Endothelial cell of umbilical vein (primary cell): ENCODE measurements at regions of chr2 and their contacts with region 1.

Region 1: DNA sequence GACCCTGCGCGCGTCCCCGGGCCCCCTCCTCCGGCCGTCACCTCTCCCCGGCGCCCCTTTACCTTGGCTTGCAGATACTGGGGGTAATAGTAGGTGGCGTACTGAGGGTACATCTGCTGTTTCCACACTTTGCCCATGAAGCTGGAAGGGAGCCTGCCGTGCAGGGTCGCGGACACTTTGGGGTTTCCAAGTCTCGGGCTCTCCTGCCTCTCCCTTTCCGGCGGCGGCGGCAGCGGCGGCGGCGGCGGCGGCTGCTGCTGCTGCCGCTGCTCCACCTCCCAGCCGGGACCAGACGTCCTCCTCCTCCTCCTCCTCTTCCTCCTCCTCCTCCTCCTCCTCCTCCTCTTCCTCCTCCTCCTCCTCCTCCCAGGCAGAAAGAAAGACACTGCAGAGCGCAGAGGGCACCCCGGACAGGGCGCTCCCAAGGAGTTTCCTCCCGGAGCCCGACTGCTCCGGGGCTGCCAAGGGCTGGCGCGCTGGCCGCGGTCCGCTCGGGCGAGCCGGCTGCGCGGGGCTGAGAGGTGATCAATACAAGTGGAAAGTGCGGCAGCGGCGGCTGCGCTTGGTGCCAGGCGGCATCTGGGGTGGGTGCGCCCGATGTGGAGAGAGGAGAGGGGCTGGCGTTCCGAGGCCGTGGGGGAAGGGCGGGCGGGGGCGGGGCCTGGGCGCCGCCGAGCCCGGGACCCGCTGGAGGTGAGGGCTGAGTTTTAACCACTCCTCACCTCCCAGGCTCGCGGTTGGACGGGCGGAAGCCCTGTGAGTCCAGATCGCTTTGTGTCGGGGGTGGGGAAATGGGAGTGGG is at the start of gene RBMS1:
- DNase-seq: no peak
- H3K4me3 ChIP-seq: peak within 1 kb of the TSS; percentile 98 to 100 (median 99)
- H3K27ac ChIP-seq: peak within 1 kb of the TSS; percentile 89
- H3K4me1 ChIP-seq: peaks cover 25% of the 10 kb centered on the region
- H3K27me3 ChIP-seq: no peaks in the 10 kb centered on the region
- CTCF ChIP-seq: no peak
- POLR2A ChIP-seq: no peak
- total RNA-seq, gene RBMS1: 93.3 and 94.8 TPM in 2 replicates

Region 2: GRCh38 chr2:160278879-160279177 is 214.6 kb before region 1 on chr2:
- CTCF ChIA-PET with region 1: no interaction called
- POLR2A ChIA-PET with region 1: no interaction called
- dilution Hi-C with region 1: no loop called
- intact Hi-C with region 1: loop called (anchors 5 kb)
- DNase-seq: peak; percentile 58
- H3K4me3 ChIP-seq: no peak overlapping the region
- H3K27ac ChIP-seq: peak overlapping the region; percentile 80
- H3K4me1 ChIP-seq: peaks cover 44% of the 10 kb centered on the region
- H3K27me3 ChIP-seq: no peaks in the 10 kb centered on the region
- CTCF ChIP-seq: peak; percentile 29 to 50
- POLR2A ChIP-seq: peak; percentile 0

Region 3: DNA sequence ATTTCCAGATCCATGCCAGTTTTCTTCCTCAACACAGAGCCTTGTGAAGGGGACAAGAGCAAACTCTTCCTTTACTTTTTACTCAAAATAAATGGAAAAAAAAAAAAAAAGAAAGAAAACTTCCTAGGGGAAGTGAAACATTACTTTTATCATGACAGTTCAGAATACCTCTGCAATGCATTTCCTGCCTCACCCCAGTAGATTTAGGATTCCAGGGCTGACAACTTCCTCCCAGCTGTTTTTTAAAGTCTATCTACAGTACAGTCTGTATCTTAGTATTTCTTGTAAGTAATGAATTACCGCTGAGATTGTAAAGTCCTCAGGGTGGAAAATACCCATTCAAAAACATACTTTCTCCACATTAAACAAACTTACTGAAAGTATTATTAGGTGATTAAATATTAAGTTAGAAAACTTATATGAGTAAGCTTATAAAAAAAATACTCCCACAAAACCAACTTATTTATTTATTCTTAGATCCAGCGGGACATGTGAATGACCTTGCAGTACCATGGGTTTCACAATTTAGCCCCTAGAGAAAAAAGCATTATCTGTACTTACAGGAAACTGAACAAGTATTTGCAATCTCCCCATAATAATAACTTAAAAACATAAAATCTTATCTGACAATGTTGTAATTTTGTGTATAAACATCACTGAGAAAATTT is 117.5 kb before region 1 on chr2:
- CTCF ChIA-PET with region 1: no interaction called
- POLR2A ChIA-PET with region 1: no interaction called
- dilution Hi-C with region 1: no loop called
- intact Hi-C with region 1: loop called (anchors 1 kb)
- DNase-seq: peak; percentile 66
- H3K4me3 ChIP-seq: peak overlapping the region in 1 of 3 experiments; percentile 22
- H3K27ac ChIP-seq: peak overlapping the region; percentile 85
- H3K4me1 ChIP-seq: peaks cover 97% of the 10 kb centered on the region
- H3K27me3 ChIP-seq: no peaks in the 10 kb centered on the region
- CTCF ChIP-seq: no peak
- POLR2A ChIP-seq: peak; percentile 58

Region 4: GRCh38 chr2:160417745-160418397 is 75.6 kb before region 1 on chr2:
- CTCF ChIA-PET with region 1: no interaction called
- POLR2A ChIA-PET with region 1: no interaction called
- dilution Hi-C with region 1: no loop called
- intact Hi-C with region 1: loop called (anchors 2 kb)
- DNase-seq: peak; percentile 84
- H3K4me3 ChIP-seq: peak overlapping the region in 1 of 3 experiments; percentile 55
- H3K27ac ChIP-seq: peak overlapping the region; percentile 97
- H3K4me1 ChIP-seq: peaks cover 51% of the 10 kb centered on the region
- H3K27me3 ChIP-seq: no peaks in the 10 kb centered on the region
- CTCF ChIP-seq: no peak
- POLR2A ChIP-seq: peak; percentile 53

Region 5: GRCh38 chr2:160505256-160505655 is 11.8 kb after region 1 on chr2:
- CTCF ChIA-PET with region 1: no interaction called
- POLR2A ChIA-PET with region 1: no interaction called
- dilution Hi-C with region 1: no loop called
- intact Hi-C with region 1: no loop called
- DNase-seq: no peak
- H3K4me3 ChIP-seq: no peak overlapping the region
- H3K27ac ChIP-seq: no peak overlapping the region
- H3K4me1 ChIP-seq: no peaks in the 10 kb centered on the region
- H3K27me3 ChIP-seq: no peaks in the 10 kb centered on the region
- CTCF ChIP-seq: no peak
- POLR2A ChIP-seq: no peak

Region 6: GRCh38 chr2:160666154-160667060 is 173.0 kb after region 1 on chr2:
- CTCF ChIA-PET with region 1: interaction called, 3 read pairs
- POLR2A ChIA-PET with region 1: no interaction called
- dilution Hi-C with region 1: no loop called
- intact Hi-C with region 1: loop called (anchors 1 kb)
- DNase-seq: peak; percentile 99
- H3K4me3 ChIP-seq: peak overlapping the region in 1 of 3 experiments; percentile 33
- H3K27ac ChIP-seq: peak overlapping the region; percentile 89
- H3K4me1 ChIP-seq: peaks cover 14% of the 10 kb centered on the region
- H3K27me3 ChIP-seq: no peaks in the 10 kb centered on the region
- CTCF ChIP-seq: no peak
- POLR2A ChIP-seq: no peak